Colonic mucosa (tissue), 4 donors: ENCODE measurements at regions of chr18 and their contacts with region 1.

Region 1: DNA sequence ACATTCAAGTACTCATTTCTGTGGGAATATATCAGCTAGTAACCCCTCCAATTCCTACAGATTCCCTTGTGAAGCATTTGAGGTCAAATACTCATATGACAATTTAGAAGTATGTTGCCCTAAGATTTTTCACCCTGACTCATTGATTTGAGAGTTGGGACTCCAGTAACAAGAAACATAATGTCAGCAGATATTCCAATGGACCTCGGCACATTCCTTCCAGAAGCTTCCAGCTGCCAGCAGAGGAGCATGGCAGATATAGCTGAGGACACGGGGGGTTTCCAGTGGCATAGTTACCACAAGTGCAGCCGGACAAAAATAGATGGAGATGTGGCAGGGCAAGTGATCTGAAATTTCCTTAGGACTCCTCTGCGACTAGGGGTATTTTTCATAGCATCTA is 101.9 kb upstream of the ARHGAP28 start:
- DNase-seq: no peak
- H3K4me3 ChIP-seq: no peak overlapping the region
- H3K27ac ChIP-seq: no peak overlapping the region
- H3K4me1 ChIP-seq: no peaks in the 10 kb centered on the region
- H3K27me3 ChIP-seq: no peaks in the 10 kb centered on the region
- CTCF ChIP-seq: no peak

Region 2: DNA sequence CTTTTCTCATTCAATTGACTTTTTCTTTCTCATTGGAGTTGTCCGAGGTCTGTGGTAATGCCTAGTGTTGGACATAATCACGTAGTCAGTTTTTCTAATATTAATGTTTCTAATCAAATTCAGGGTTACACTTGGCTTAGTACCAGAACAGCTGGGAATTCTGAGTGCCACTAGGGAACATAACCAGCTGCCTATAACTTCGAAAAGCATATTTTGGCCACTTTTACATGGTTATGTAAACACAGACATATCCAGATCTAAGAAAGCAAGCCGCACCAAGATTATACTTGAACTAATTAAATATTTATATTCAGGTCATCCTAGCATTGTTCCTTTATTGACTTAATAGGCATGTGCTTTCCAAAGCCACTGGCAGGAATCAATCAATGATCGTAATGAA is 10.8 kb after region 1 on chr18:
- intact Hi-C with region 1: loop called (anchors 1 kb)
- DNase-seq: no peak
- H3K4me3 ChIP-seq: no peak overlapping the region
- H3K27ac ChIP-seq: no peak overlapping the region
- H3K4me1 ChIP-seq: no peaks in the 10 kb centered on the region
- H3K27me3 ChIP-seq: no peaks in the 10 kb centered on the region
- CTCF ChIP-seq: no peak

Region 3: DNA sequence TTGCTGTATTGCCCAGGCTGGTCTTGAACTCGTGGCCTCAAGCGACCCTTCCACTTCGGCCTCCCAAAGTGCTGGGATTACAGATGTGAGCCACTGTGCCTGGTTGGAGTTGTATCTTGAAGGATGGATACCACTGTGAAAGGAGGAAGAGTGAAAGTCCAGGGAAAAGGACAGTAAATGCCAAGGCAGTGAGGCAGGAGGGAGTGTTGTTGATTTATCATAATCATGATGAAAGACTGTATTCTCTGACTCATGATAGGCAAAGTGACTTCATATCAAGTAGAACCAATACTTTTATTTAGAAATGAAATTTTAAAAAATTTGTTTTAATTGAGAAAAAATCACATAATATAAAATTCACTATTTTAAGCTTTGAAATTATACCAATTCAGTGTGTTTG is 264.1 kb after region 1 on chr18:
- intact Hi-C with region 1: no loop called
- DNase-seq: no peak
- H3K4me3 ChIP-seq: no peak overlapping the region
- H3K27ac ChIP-seq: no peak overlapping the region
- H3K4me1 ChIP-seq: no peaks in the 10 kb centered on the region
- H3K27me3 ChIP-seq: no peaks in the 10 kb centered on the region
- CTCF ChIP-seq: no peak